ENCODE measurements at regions of chr4 and their contacts with region 1.

Region 1: GRCh38 chr4:7802093-7802726 is 137.5 kb downstream of the AFAP1 start:
- DNase-seq: peak; percentile 39 to 95
- H3K4me3 ChIP-seq: no peak overlapping the region
- H3K27ac ChIP-seq: no peak overlapping the region
- H3K4me1 ChIP-seq: peaks cover 11 to 20% (median 17%) of the 10 kb centered on the region in 4 experiments
- H3K27me3 ChIP-seq: no peaks in the 10 kb centered on the region
- CTCF ChIP-seq: peak; percentile 72 to 89 (median 85)
- EP300 ChIP-seq: no peak
- POLR2A ChIP-seq: no peak
- RAD21 ChIP-seq: peak; percentile 80 to 85

Region 2: DNA sequence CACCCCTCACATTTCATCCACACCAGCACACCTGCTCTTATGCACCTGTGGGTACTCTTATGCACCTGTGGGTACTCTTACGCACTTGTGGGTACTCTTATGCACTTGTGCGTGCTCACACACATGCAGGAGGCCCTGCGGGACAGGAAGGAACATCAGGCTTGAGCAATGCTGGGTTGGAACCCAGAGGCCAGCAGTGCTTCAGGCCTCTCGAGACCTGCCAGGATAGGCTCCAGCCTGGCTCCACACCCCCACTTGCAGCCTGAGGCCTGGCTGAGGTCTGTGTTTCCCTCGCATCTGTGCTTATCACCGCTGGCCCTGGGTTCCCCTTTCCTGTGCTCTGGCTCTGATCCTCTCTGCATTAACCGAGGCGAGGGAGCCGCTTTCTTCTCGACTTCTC is 575.2 kb before region 1 on chr4:
- CTCF ChIA-PET with region 1: no interaction called
- POLR2A ChIA-PET with region 1: no interaction called
- DNase-seq: no peak
- H3K4me3 ChIP-seq: no peak overlapping the region
- H3K27ac ChIP-seq: no peak overlapping the region
- H3K4me1 ChIP-seq: no peaks in the 10 kb centered on the region
- H3K27me3 ChIP-seq: no peaks in the 10 kb centered on the region
- CTCF ChIP-seq: no peak
- EP300 ChIP-seq: no peak
- POLR2A ChIP-seq: no peak
- RAD21 ChIP-seq: no peak

Region 3: GRCh38 chr4:7770224-7771050 is 31.8 kb before region 1 on chr4:
- CTCF ChIA-PET with region 1: interaction called, 24 read pairs
- POLR2A ChIA-PET with region 1: no interaction called
- DNase-seq: peak in 1 of 2 experiments; percentile 60
- H3K4me3 ChIP-seq: no peak overlapping the region
- H3K27ac ChIP-seq: no peak overlapping the region
- H3K4me1 ChIP-seq: peaks cover 0 to 5% (median 1%) of the 10 kb centered on the region in 4 experiments; a peak in 4 of 7 replicates
- H3K27me3 ChIP-seq: no peaks in the 10 kb centered on the region
- CTCF ChIP-seq: peak in 2 of 3 experiments; percentile 71 to 81; a peak in 3 of 4 replicates
- EP300 ChIP-seq: no peak
- POLR2A ChIP-seq: no peak
- RAD21 ChIP-seq: peak; percentile 62 to 65

Region 4: DNA sequence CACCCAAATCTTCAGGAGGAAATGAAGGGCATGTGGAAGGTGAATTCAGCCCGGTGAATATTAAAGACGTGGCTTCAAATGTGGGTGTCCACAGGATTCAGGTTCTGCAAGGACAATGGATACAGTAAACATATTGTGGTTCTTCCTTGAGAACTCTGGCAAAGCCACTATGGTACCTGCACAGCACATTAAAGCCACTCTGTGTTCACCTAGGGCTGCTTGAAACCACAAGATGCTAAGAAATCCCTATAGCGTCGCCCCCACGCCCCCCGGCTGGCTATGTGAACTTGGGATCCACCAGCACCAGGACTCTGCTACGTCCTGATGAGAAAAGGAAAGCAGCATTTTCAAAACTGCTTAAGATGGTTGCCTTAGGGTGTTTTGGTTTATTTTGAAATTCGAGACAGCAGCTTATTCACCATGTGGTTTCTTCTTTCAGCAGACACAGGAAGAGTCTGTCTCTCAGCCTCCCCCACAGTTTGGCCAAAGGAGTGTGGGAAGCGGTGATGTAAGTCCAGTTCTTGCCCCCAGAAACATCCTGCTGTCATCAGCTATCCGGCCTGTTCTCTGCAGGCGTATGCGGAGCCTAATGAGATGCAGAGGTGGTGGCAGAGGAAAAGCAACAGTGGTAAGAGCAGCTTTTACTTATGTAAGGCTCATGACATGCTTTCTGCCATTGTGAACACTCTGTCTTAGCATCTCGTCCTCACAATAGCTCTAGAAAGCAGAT is 25.9 kb after region 1 on chr4:
- CTCF ChIA-PET with region 1: interaction called, 12 read pairs
- POLR2A ChIA-PET with region 1: interaction called, 3 read pairs
- DNase-seq: no peak
- H3K4me3 ChIP-seq: no peak overlapping the region
- H3K27ac ChIP-seq: no peak overlapping the region
- H3K4me1 ChIP-seq: peaks cover 0 to 9% (median 5%) of the 10 kb centered on the region in 4 experiments; a peak in 4 of 7 replicates
- H3K27me3 ChIP-seq: no peaks in the 10 kb centered on the region
- CTCF ChIP-seq: no peak
- EP300 ChIP-seq: no peak
- POLR2A ChIP-seq: no peak
- RAD21 ChIP-seq: no peak

Region 5: DNA sequence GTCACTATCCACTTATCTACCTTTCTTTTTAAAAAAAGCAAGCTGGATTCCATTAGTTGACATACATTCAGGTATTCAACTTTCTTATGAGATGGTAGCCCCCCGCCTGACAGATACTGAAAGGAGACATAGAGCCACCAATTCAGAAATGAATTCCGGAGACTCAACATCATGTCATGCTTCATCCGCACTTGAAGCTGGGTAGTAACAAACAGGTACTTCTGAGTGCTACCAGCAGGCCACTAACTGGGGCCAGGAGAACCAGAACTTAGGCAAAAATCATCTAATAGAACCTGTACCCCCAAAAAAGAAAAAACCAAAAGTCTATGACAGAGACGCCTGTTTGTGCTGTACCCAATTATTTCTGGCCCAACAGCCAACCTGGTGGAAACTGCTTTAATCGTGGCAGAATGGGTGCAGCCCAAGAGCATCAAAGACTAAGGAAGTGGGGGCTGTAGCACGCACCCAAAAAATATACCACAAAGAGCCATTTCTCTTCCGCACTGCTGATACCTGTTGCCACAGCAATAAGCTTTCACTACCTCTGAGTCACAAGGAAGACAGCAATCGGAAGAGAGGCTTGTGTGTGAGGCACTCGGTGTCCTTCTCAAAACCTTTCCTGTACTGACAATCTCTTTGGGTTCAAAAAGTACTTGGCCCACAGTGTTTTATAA is 52.6 kb after region 1 on chr4:
- CTCF ChIA-PET with region 1: interaction called, 17 read pairs
- POLR2A ChIA-PET with region 1: interaction called, 3 read pairs
- DNase-seq: no peak
- H3K4me3 ChIP-seq: no peak overlapping the region
- H3K27ac ChIP-seq: no peak overlapping the region
- H3K4me1 ChIP-seq: peaks cover 0 to 4% (median 1%) of the 10 kb centered on the region in 4 experiments; a peak in 1 of 7 replicates
- H3K27me3 ChIP-seq: no peaks in the 10 kb centered on the region
- CTCF ChIP-seq: no peak
- EP300 ChIP-seq: no peak
- POLR2A ChIP-seq: no peak
- RAD21 ChIP-seq: no peak

Region 6: DNA sequence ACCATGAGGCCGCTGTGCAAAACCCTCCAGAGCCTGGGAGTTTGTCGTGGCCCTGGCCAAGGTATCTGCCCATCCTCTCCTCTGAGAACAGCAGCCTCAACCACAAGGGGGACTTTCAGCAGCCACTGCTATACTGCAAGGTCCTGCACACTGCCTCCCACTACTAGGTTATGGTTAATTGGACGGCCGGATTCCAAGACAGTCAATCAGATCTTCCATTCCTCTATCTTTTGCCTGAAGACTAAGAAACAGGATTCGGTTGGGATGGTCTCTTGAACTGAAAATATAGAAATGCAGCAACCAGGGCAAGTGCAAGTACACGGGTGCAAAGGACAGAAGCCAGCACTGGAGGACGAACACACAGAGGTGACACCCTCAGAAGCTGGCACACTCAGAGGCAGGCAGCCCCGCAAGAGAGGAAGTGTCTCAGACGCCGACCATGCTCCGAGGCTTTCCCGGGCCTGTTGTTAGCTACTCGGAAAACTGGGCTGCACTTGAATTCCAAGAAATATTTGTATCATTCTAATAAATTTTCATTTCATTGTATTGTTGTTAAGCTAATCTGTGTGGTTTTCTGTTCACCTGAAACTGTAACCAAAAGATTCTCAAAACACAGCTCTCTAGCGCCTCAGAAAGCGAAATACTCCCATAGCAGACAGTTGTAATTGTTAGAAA is 74.1 kb after region 1 on chr4:
- CTCF ChIA-PET with region 1: interaction called, 10 read pairs
- POLR2A ChIA-PET with region 1: no interaction called
- DNase-seq: no peak
- H3K4me3 ChIP-seq: no peak overlapping the region
- H3K27ac ChIP-seq: no peak overlapping the region
- H3K4me1 ChIP-seq: peaks cover 0 to 3% (median 0%) of the 10 kb centered on the region in 4 experiments; a peak in 1 of 7 replicates
- H3K27me3 ChIP-seq: no peaks in the 10 kb centered on the region
- CTCF ChIP-seq: peak; percentile 39 to 62 (median 42); a peak in 3 of 4 replicates
- EP300 ChIP-seq: no peak
- POLR2A ChIP-seq: no peak
- RAD21 ChIP-seq: peak; percentile 34 to 58; a peak in 3 of 4 replicates

Region 7: DNA sequence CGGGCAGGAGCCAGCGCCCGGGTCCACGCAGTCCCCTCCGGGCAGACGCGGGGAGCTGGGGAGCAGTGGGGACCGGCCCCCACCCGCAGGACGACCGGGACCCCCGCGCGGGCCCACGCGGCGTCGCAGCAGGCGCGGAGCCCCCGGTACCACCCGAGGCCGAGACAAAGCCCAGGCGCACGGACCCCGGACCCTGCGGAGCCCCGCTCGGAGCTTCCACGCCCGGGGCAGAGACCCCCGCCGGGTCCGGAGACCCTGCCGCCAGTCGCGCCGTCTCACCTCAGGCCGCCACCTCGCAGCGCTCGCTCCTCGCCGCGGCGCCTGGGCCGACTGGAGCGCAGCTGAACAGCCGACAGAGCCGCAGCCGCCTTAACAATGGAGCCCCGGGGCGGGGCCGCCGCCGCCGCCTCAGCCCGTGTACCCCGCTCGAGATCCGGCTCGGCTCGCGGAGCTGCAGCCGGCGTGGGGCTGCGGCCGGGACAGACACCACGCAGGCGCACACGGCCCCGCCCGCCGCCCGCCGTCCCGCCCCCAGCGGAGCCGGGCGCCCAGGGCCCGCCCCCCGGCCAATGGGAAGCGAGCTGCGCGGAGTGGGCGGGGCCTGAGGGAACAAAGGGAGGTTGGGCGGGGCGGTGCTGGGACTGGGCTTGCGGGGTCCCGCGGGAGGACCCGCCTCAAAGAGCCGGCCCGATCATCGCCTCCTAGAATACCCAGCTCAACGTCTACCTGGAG is 137.3 kb after region 1 on chr4 and contains the start of gene AFAP1:
- CTCF ChIA-PET with region 1: interaction called, 10 read pairs
- POLR2A ChIA-PET with region 1: interaction called, 3 read pairs
- DNase-seq: peak in 1 of 2 experiments; percentile 97
- H3K4me3 ChIP-seq: peak within 1 kb of the TSS; percentile 36 to 85 (median 54)
- H3K27ac ChIP-seq: no peak within 1 kb of the TSS
- H3K4me1 ChIP-seq: peaks cover 8 to 24% (median 12%) of the 10 kb centered on the region in 4 experiments; a peak in 6 of 7 replicates
- H3K27me3 ChIP-seq: no peaks in the 10 kb centered on the region
- CTCF ChIP-seq: no peak
- EP300 ChIP-seq: no peak
- POLR2A ChIP-seq: 0 out of 3 replicates have a peak, but pooled peaks of 1 of the 2 experiments have one; percentile 26
- RAD21 ChIP-seq: peak in 1 of 2 experiments; percentile 23; a peak in 1 of 4 replicates
- total RNA-seq, gene AFAP1: 16.2 and 18.2 TPM in 2 replicates

Region 8: DNA sequence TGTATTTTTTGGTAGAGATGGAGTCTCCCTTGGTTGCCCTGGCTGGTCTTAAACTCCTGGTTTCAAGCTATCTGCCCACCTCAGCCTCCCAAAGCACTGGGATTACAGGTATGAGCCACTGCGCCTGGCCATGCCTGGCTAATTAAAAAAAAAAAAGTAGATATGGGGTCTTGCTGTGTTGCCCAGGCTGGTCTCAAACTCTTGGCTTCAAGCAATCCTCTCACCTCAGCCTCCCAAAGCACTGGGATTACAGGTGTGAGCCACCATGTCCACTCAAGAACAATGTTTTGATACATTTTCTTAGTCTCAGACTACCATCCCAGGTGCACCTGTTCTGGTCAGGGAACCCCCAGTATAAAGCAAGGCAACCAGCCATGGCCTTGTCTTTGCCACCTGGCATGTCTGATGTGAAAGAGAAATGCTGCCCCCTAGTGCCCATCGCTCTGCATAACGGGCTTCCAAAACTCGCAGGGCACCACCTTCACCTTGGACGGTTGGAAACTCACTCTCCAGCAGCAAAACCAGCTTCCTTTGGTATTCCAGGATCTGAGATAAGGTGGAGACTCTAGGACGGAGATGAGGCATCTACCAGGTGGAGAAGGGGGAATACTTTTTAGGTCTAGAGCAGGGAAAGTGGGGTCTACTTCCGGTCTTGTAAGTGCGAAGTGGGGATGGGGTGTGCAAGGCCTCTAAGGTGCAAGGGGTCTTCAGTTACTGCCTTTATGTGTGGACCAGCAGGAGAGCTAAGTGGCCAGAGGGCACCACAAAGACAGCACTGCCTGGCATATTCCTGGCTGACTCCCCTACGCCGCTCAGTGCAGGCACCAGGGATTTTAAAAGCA is 185.2 kb after region 1 on chr4:
- CTCF ChIA-PET with region 1: interaction called, 180 read pairs
- POLR2A ChIA-PET with region 1: interaction called, 4 read pairs
- DNase-seq: peak in 1 of 2 experiments; percentile 95
- H3K4me3 ChIP-seq: no peak overlapping the region
- H3K27ac ChIP-seq: no peak overlapping the region
- H3K4me1 ChIP-seq: peaks cover 0 to 6% (median 2%) of the 10 kb centered on the region in 4 experiments; a peak in 1 of 7 replicates
- H3K27me3 ChIP-seq: no peaks in the 10 kb centered on the region
- CTCF ChIP-seq: peak in 2 of 3 experiments; percentile 93 to 98; a peak in 3 of 4 replicates
- EP300 ChIP-seq: no peak
- POLR2A ChIP-seq: no peak
- RAD21 ChIP-seq: peak; percentile 99

Region 9: GRCh38 chr4:8315435-8316250 is 513.4 kb after region 1 on chr4:
- CTCF ChIA-PET with region 1: no interaction called
- POLR2A ChIA-PET with region 1: no interaction called
- DNase-seq: peak in 1 of 2 experiments; percentile 58
- H3K4me3 ChIP-seq: no peak overlapping the region
- H3K27ac ChIP-seq: no peak overlapping the region
- H3K4me1 ChIP-seq: peaks cover 0 to 17% (median 12%) of the 10 kb centered on the region in 4 experiments; a peak in 6 of 7 replicates
- H3K27me3 ChIP-seq: no peaks in the 10 kb centered on the region; a peak in 2 of 7 replicates
- CTCF ChIP-seq: no peak
- EP300 ChIP-seq: no peak
- POLR2A ChIP-seq: no peak
- RAD21 ChIP-seq: no peak

Measured in H1 (cell line).